CD14-positive monocyte (primary cell): ENCODE measurements at regions of chr11 and their contacts with region 1.

Region 1: DNA sequence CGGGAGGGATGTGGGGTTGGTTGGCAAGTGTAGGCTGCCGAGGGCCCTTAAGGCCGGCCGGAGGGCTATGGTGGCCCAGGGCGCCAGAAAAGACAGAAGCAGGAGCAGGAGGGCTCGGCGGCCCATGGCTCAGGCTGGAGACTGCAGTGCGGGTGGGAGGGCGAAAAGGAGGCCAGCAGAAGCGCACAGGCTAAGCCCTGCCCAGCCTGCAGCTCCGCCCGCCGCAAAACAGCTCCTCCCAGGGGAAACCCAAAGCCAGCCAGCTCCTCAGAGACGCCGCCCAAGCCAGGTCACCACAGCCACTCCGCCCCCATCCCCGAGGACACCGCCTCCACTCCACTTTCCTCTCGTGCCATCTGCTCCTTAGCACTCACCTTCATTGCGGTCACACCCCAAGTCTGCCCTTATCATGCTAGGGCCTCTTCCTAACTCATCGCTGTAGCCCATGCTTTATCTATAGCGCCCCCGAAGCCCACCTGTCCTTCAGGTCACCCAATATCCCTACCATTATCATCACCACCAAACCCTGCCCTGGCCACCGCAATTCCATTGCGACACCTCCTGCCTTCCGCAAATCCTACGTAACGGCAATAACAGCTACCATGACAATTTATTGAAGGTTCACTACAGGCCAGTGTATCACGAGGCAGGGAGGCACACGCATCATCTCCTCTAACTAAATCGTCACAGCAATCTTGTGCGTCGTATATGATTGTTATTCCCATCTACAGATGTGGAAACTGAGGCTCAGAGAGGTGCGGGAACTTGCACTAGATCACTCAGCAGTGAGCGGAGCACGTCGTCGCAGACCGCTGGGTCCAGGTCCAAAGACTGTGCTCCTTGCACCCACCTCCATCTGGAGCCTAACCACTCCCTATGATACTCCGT is at the start of gene PRCP:
- DNase-seq: peak; percentile 89 to 98 (median 96)
- H3K4me3 ChIP-seq: peak within 1 kb of the TSS; percentile 76 to 89 (median 78)
- H3K4me3 Mint-ChIP-seq: peak within 1 kb of the TSS; percentile 99 to 100
- H3K27ac ChIP-seq: peak within 1 kb of the TSS; percentile 99
- H3K27ac Mint-ChIP-seq: peak within 1 kb of the TSS; percentile 100
- H3K4me1 ChIP-seq: peaks cover 57 to 62% of the 10 kb centered on the region in 2 donors
- H3K4me1 Mint-ChIP-seq: peaks cover 49% of the 10 kb centered on the region
- H3K27me3 ChIP-seq: no peaks in the 10 kb centered on the region
- H3K27me3 Mint-ChIP-seq: peaks cover 0 to 2% (median 0%) of the 10 kb centered on the region in 3 donors
- CTCF ChIP-seq: no peak
- polyA plus RNA-seq, gene PRCP: 68.0 to 228 (median 186) TPM

Region 2: GRCh38 chr11:82867495-82868082 is 32.9 kb before region 1 on chr11:
- intact Hi-C with region 1: loop called in 1 of 2 experiments (anchors 5 kb)
- DNase-seq: peak; percentile 68 to 86 (median 78)
- H3K4me3 ChIP-seq: peak overlapping the region; percentile 25 to 80 (median 71)
- H3K4me3 Mint-ChIP-seq: peak overlapping the region; percentile 78 to 90
- H3K27ac ChIP-seq: peak overlapping the region in 1 of 2 donors; percentile 73
- H3K27ac Mint-ChIP-seq: peak overlapping the region; percentile 57 to 94 (median 82)
- H3K4me1 ChIP-seq: peaks cover 26 to 35% of the 10 kb centered on the region in 2 donors
- H3K4me1 Mint-ChIP-seq: peaks cover 36% of the 10 kb centered on the region
- H3K27me3 ChIP-seq: no peaks in the 10 kb centered on the region
- H3K27me3 Mint-ChIP-seq: no peaks in the 10 kb centered on the region
- CTCF ChIP-seq: peak; percentile 86

Region 3: GRCh38 chr11:83156150-83156995 is 255.9 kb after region 1 on chr11:
- intact Hi-C with region 1: loop called (anchors 2 to 5 kb)
- DNase-seq: peak; percentile 100
- H3K4me3 ChIP-seq: peak overlapping the region; percentile 77 to 98 (median 91)
- H3K4me3 Mint-ChIP-seq: peak overlapping the region; percentile 98 to 99
- H3K27ac ChIP-seq: peak overlapping the region; percentile 95 to 97
- H3K27ac Mint-ChIP-seq: peak overlapping the region; percentile 90 to 100 (median 100)
- H3K4me1 ChIP-seq: peaks cover 25 to 40% of the 10 kb centered on the region in 2 donors
- H3K4me1 Mint-ChIP-seq: peaks cover 24% of the 10 kb centered on the region
- H3K27me3 ChIP-seq: no peaks in the 10 kb centered on the region
- H3K27me3 Mint-ChIP-seq: peaks cover 0 to 4% (median 0%) of the 10 kb centered on the region in 3 donors
- CTCF ChIP-seq: no peak

Region 4: GRCh38 chr11:83193315-83194280 is 293.1 kb after region 1 on chr11 and contains the start of gene ANKRD42:
- intact Hi-C with region 1: loop called in 1 of 2 experiments (anchors 2 kb)
- DNase-seq: peak; percentile 90 to 96 (median 96)
- H3K4me3 ChIP-seq: peak within 1 kb of the TSS; percentile 82 to 99 (median 85)
- H3K4me3 Mint-ChIP-seq: peak within 1 kb of the TSS; percentile 97 to 99
- H3K27ac ChIP-seq: peak within 1 kb of the TSS; percentile 93 to 96
- H3K27ac Mint-ChIP-seq: peak within 1 kb of the TSS; percentile 97 to 100 (median 99)
- H3K4me1 ChIP-seq: peaks cover 23 to 27% of the 10 kb centered on the region in 2 donors
- H3K4me1 Mint-ChIP-seq: peaks cover 31% of the 10 kb centered on the region
- H3K27me3 ChIP-seq: no peaks in the 10 kb centered on the region
- H3K27me3 Mint-ChIP-seq: no peaks in the 10 kb centered on the region
- CTCF ChIP-seq: no peak
- polyA plus RNA-seq, gene ANKRD42: 4.3 to 6.2 (median 6.1) TPM

Region 5: DNA sequence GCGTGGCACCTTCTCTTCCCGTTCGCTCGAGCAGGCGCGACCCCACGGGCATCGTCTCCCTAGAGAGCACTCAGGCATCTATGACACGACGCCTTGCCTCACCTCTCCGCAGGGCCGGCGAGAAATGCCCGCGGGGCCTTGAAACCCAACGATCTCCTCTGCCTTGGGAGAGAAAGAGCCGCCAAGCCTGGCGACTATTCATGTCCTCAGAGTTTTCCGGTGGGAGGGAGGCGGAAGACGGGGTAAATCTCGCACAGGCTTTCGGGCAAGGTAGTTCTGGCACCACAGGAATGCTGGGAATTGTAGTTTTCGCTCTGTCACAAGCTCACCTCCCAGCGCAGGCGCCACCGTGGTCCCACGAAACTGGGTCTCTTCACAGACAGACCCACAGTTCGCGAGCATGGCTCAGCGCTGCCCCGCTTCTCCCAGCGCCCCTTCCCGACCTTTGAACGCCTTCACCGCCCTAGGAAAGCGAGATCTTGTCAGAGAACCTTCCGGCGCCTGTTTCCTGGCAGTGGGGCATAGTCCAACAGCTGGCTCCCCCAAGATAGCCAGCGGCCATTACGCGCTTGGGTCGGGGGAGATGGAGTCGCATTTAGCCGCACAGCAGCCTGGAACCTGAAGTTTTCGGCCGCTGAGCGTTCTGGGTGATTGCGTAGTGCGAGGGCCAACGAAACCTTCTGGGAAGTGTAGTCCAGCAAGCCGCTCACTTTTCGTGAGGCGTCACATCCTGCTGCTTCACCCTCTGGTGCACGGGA is 385.4 kb after region 1 on chr11 and contains the start of gene CCDC90B:
- intact Hi-C with region 1: loop called (anchors 5 kb)
- DNase-seq: peak; percentile 94 to 96 (median 96)
- H3K4me3 ChIP-seq: peak within 1 kb of the TSS; percentile 76 to 95 (median 93)
- H3K4me3 Mint-ChIP-seq: peak within 1 kb of the TSS; percentile 93 to 96
- H3K27ac ChIP-seq: peak within 1 kb of the TSS; percentile 86 to 97
- H3K27ac Mint-ChIP-seq: peak within 1 kb of the TSS; percentile 96 to 100 (median 100)
- H3K4me1 ChIP-seq: peaks cover 23 to 26% of the 10 kb centered on the region in 2 donors
- H3K4me1 Mint-ChIP-seq: peaks cover 31% of the 10 kb centered on the region
- H3K27me3 ChIP-seq: no peaks in the 10 kb centered on the region
- H3K27me3 Mint-ChIP-seq: peaks cover 0 to 4% (median 2%) of the 10 kb centered on the region in 3 donors
- CTCF ChIP-seq: no peak
- polyA plus RNA-seq, gene CCDC90B: 15.3 to 46.2 (median 39.6) TPM